ENCODE measurements at regions of chr12 and their contacts with region 1.

Region 1: GRCh38 chr12:50222275-50222795 is 55.2 kb upstream of the CERS5 start:
- DNase-seq: peak in 1 of 2 donors; percentile 83
- H3K4me3 ChIP-seq: peak overlapping the region; percentile 53 to 69
- H3K27ac ChIP-seq: peak overlapping the region; percentile 80 to 84
- H3K4me1 ChIP-seq: peaks cover 3 to 21% of the 10 kb centered on the region in 2 donors
- H3K27me3 ChIP-seq: no peaks in the 10 kb centered on the region
- CTCF ChIP-seq: peak in 2 of 3 experiments; percentile 33 to 41

Region 2: DNA sequence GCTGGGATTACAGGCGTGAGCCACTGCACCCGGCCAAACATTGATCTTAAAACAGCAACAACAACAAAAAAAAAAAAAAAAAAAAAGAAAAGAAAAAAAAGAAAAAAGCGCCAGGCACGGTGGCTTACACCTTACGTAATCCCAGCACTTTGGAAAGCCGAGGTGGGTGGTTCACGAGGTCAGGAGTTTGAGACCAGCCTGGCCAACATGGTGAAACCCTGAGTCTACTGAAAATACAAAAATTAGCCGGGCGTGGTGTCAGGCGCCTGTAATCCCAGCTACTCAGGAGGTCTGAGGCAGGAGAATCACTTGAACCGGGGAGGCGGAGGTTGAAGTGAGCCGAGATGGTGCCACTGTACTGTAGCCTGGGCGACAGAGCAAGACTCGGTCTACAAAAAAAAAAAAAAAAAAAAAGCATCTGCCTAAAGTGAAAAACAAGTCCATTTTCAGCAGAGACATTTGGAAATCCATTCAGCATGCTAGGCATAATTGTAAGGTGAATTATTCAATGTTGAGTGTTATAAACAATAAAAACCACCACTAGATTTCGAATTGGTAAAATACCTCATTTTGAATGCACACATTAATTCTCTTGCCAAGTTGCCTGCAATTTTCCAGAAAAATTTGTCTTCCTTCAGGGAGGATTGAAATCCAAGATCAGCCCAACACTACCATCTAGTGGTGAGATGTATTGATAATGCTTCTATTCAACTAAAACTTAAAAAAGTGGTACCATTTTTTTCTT is 47.2 kb before region 1 on chr12:
- intact Hi-C with region 1: no loop called
- DNase-seq: no peak
- H3K4me3 ChIP-seq: no peak overlapping the region
- H3K27ac ChIP-seq: no peak overlapping the region
- H3K4me1 ChIP-seq: no peaks in the 10 kb centered on the region
- H3K27me3 ChIP-seq: no peaks in the 10 kb centered on the region
- CTCF ChIP-seq: peak; percentile 51 to 73 (median 72)

Region 3: DNA sequence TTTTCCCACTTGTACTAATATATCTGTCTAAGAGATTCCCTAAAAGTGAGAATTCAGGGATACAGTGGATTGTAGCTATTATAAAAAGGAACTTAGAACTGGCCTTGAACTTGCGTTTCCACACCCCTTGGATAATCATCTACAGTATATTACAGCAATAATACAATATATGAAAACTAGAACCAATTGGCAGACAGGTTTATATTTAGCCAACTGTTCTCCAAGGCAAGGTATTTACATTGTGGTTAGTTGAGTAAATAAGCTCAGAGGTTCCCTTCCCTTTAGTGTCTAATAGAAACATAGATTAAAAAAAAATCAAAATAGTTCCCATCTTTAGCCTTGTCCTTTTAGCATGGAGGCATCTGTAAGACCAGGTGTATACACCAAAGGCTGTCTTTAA is 18.8 kb after region 1 on chr12:
- intact Hi-C with region 1: loop called (anchors 2 kb)
- DNase-seq: no peak
- H3K4me3 ChIP-seq: no peak overlapping the region
- H3K27ac ChIP-seq: peak overlapping the region; percentile 89 to 94
- H3K4me1 ChIP-seq: peaks cover 10 to 40% of the 10 kb centered on the region in 2 donors
- H3K27me3 ChIP-seq: no peaks in the 10 kb centered on the region
- CTCF ChIP-seq: no peak

Region 4: GRCh38 chr12:50271280-50272247 is 49.2 kb after region 1 on chr12:
- intact Hi-C with region 1: no loop called
- DNase-seq: no peak
- H3K4me3 ChIP-seq: peak overlapping the region; percentile 34 to 43
- H3K27ac ChIP-seq: peak overlapping the region; percentile 59 to 78
- H3K4me1 ChIP-seq: peaks cover 0 to 4% of the 10 kb centered on the region in 2 donors
- H3K27me3 ChIP-seq: no peaks in the 10 kb centered on the region
- CTCF ChIP-seq: no peak

Region 5: DNA sequence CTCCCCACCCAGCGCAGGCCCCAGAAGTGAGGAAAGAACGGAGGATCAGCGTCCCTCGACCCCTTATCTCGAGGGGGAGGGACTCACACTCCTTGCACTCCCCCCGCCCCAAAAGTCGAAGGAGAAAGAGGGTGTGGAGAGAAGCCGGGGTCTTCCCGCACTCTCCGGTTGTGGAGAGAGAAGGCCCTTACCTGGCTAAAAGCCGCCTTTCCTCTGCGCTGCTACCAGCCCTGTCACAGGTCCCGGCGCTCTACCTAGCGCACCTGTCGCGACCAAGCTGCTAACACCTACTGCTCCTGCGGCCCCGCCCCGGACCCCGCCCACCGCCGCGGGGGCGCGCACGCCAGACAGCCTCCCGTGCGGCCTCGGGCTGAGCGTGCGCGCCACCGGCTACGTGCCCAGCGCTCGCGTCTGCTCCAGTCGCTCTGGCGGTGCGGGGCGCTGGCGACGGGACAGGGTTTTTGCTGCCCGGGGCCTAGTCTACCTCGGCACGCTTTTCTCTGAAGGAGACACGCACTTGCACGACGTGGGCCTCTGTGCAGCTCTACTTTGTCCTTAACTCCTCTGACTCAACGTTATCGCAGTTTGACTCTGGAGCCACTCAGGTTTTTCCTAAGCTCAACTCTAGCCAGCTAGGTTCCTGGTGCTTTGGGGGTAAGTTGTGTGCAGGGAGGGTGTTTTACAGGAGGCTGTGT is 61.0 kb after region 1 on chr12 and contains the start of gene LIMA1:
- intact Hi-C with region 1: loop called (anchors 1 kb)
- DNase-seq: peak; percentile 43 to 94
- H3K4me3 ChIP-seq: peak within 1 kb of the TSS; percentile 83 to 87
- H3K27ac ChIP-seq: peak within 1 kb of the TSS; percentile 59 to 68
- H3K4me1 ChIP-seq: peaks cover 0 to 5% of the 10 kb centered on the region in 2 donors
- H3K27me3 ChIP-seq: no peaks in the 10 kb centered on the region
- CTCF ChIP-seq: peak; percentile 31 to 89 (median 61)
- total RNA-seq, gene LIMA1: 79.4 TPM

Region 6: DNA sequence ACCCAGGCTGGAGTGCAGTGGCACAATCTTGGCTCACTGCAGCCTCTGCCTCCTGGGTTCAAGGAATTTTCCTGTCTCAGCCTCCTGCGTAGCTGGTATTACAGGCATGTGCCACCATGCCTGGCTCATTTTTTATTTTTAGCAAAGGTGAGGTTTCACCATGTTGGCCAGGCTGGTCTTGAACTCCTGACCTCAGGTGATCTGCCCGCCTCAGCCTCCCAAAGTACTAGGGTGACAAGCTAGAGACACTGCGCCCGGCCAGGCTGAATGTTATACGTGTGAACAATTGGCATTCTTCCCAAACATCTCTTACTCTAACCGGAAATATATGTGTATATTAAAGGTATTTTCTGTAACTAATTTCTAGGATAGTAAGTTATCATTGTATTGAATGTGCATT is 74.2 kb after region 1 on chr12:
- intact Hi-C with region 1: no loop called
- DNase-seq: no peak
- H3K4me3 ChIP-seq: no peak overlapping the region
- H3K27ac ChIP-seq: no peak overlapping the region
- H3K4me1 ChIP-seq: no peaks in the 10 kb centered on the region
- H3K27me3 ChIP-seq: no peaks in the 10 kb centered on the region
- CTCF ChIP-seq: no peak

Region 7: DNA sequence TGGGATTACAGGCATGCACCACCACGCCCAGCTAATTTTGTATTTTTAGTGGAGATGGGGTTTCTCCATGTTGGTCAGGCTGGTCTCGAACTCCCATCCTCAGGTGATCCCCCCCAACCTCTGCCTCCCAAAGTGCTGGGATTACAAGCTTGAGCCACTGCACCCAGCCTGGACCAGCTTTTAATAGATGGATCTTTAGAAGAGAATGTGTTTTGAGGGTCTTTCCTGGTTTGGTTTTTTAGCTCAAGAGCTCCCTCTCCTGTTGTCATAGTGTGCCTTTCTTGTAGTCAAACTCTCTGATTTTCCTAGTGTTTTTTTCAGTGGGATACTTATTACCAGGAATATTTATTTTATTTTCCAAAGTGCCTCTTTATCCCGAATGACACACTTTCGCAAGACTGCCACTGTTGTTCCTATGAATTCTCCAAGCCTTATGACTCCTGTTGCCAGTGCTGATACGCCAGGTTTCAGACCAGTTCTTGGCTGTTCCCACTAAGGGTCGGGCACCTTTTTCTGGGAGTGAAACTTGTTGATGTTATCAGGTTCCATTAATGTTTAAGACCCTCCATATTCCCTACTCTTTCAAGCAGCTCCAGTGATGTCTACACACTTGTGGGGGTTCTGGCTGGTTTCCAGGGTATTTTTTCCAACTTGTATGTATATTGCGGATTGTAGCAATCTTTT is 92.4 kb after region 1 on chr12:
- intact Hi-C with region 1: loop called (anchors 2 kb)
- DNase-seq: no peak
- H3K4me3 ChIP-seq: no peak overlapping the region
- H3K27ac ChIP-seq: no peak overlapping the region
- H3K4me1 ChIP-seq: no peaks in the 10 kb centered on the region
- H3K27me3 ChIP-seq: no peaks in the 10 kb centered on the region
- CTCF ChIP-seq: peak; percentile 27 to 65 (median 47)

Region 8: DNA sequence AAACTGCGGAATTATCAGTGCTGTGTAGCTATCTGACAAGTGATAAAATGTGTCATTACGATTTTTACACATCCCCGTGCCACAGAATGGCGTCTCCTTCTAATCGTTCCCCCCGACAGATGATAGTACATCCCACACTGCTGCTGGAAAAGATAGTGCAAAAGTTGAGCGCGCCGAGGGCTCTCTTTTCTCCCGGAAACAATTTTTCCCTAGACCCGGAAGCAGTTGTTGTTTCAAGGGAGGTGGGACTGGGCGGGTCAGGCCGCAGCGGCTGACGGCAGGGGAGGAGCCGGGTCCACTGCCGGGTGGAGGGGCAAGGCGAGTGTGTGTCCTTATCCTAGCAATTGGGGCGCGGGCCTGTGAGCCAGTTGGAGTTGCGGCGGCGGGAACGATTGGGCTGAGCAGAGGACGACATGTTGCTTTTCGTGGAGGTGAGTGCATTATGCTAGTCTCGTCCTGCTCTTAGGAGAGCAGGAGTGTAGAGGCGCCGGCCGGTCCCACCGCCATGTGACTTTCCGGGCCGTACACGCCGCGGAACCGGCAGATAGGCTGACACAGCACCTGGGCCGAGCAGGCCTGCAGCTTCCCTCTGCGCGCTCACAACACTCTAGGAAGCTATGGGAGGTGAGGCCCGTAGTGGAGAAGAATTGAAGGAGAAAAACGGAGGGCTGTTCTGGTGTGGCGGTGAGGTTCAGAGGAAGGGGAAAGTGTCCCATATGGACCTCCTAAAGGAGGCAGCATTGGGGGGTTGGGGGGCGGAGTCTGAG is 178.4 kb after region 1 on chr12 and contains the start of gene LARP4:
- intact Hi-C with region 1: loop called (anchors 10 kb)
- DNase-seq: peak; percentile 76 to 95
- H3K4me3 ChIP-seq: peak within 1 kb of the TSS; percentile 76 to 80
- H3K27ac ChIP-seq: peak within 1 kb of the TSS; percentile 86 to 91
- H3K4me1 ChIP-seq: peaks cover 0 to 12% of the 10 kb centered on the region in 2 donors
- H3K27me3 ChIP-seq: no peaks in the 10 kb centered on the region
- CTCF ChIP-seq: peak in 1 of 3 experiments; percentile 7
- total RNA-seq, gene LARP4: 45.7 TPM

Measured in ascending aorta (tissue), 2 donors.